Motor neuron (in vitro differentiated cells): ENCODE measurements at regions of chr6 and their contacts with region 1.

Region 1: GRCh38 chr6:72411872-72412708 is 209.8 kb upstream of the KCNQ5 start:
- ATAC-seq: peak; percentile 55 to 80 (median 76)
- H3K4me3 ChIP-seq: no peak overlapping the region
- H3K27ac ChIP-seq: no peak overlapping the region
- H3K4me1 ChIP-seq: no peaks in the 10 kb centered on the region

Region 2: GRCh38 chr6:71698703-71699102 is 713.4 kb before region 1 on chr6:
- in situ Hi-C with region 1: no loop called
- ATAC-seq: no peak
- H3K4me3 ChIP-seq: no peak overlapping the region
- H3K27ac ChIP-seq: no peak overlapping the region
- H3K4me1 ChIP-seq: no peaks in the 10 kb centered on the region

Region 3: GRCh38 chr6:72580281-72580940 is 168.3 kb after region 1 on chr6:
- in situ Hi-C with region 1: loop called in 3 of 9 experiments (anchors 10 to 25 kb)
- ATAC-seq: peak; percentile 43 to 98 (median 76)
- H3K4me3 ChIP-seq: no peak overlapping the region
- H3K27ac ChIP-seq: no peak overlapping the region
- H3K4me1 ChIP-seq: no peaks in the 10 kb centered on the region

Region 4: GRCh38 chr6:72941751-72942150 is 529.7 kb after region 1 on chr6:
- in situ Hi-C with region 1: no loop called
- ATAC-seq: no peak
- H3K4me3 ChIP-seq: no peak overlapping the region
- H3K27ac ChIP-seq: no peak overlapping the region
- H3K4me1 ChIP-seq: no peaks in the 10 kb centered on the region

Region 5: DNA sequence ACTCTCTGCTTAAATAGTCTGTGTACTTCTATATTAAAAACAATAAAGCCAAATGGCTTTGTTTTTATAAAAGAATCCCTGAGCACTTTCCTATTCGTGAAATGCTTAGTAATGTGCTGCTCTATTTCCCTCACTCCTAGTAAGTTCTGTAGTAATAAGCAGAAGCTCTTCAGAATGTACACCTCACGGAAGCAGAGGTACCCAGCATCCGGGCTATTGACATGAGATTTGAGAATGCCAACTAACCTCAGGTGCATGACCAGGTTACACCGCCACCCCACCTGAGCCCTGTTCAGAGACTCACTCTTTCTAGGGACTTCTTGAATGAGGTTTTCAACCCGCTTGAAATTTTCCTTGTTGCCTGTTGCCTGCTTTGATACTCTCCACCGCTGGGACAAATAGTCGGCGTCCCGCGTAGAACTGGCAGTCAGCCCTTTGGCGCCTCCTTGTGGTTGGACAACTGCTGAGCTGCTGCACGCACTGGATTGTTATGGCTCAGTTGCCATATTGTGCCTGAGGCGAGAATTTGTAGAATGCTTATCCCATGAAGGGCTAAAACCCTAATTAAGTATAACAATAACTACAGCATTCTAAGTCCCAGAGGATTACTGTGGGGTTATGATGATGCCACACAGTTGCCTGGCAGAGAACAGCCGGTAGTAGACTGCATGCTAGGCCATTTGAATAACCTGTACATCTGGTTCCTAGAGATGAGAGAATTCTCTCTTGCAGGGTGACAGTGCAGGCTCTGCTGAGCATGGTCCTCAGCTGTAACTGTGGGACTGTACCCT is 717.8 kb after region 1 on chr6:
- in situ Hi-C with region 1: loop called in 3 of 9 experiments (anchors 25 kb)
- ATAC-seq: peak; percentile 63 to 98 (median 87)
- H3K4me3 ChIP-seq: no peak overlapping the region
- H3K27ac ChIP-seq: no peak overlapping the region
- H3K4me1 ChIP-seq: peaks cover 0 to 15% of the 10 kb centered on the region in 2 donors

Region 6: GRCh38 chr6:73152966-73153757 is 741.1 kb after region 1 on chr6:
- in situ Hi-C with region 1: loop called in 4 of 9 experiments (anchors 25 kb)
- ATAC-seq: no peak
- H3K4me3 ChIP-seq: no peak overlapping the region
- H3K27ac ChIP-seq: no peak overlapping the region
- H3K4me1 ChIP-seq: no peaks in the 10 kb centered on the region

Region 7: GRCh38 chr6:73180763-73181619 is 768.9 kb after region 1 on chr6:
- in situ Hi-C with region 1: loop called in 3 of 9 experiments (anchors 10 to 25 kb)
- ATAC-seq: peak; percentile 77 to 94 (median 85)
- H3K4me3 ChIP-seq: no peak overlapping the region
- H3K27ac ChIP-seq: no peak overlapping the region
- H3K4me1 ChIP-seq: no peaks in the 10 kb centered on the region